Prostate gland (tissue), 2 donors: ENCODE measurements at regions of chr11 and their contacts with region 1.

Region 1: GRCh38 chr11:125923012-125923579 is 18.8 kb downstream of the DDX25 start:
- DNase-seq: peak; percentile 69
- H3K4me3 ChIP-seq: no peak overlapping the region
- H3K27ac ChIP-seq: no peak overlapping the region
- H3K4me1 ChIP-seq: no peaks in the 10 kb centered on the region
- H3K27me3 ChIP-seq: no peaks in the 10 kb centered on the region
- CTCF ChIP-seq: peak; percentile 58 to 84 (median 72)
- POLR2A ChIP-seq: no peak

Region 2: DNA sequence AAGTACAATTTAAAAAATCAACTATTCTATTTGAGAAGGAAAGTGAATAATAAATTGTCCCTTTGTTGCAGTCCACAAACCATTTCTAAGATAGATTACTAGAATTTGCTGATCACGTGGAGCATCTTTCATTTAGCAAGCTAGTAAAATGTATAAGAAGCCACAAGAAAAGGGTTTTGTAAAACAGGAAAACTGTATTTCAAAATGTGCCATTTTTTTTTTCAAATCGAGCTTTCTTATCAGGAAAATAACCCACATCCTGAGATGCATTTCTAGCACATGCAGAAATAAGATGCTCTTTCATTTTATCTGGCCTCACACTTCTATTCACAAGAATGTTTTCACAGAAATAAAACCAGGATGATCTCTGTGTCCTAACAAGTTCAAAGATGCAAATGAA is 138.4 kb before region 1 on chr11:
- intact Hi-C with region 1: no loop called
- DNase-seq: no peak
- H3K4me3 ChIP-seq: no peak overlapping the region
- H3K27ac ChIP-seq: no peak overlapping the region
- H3K4me1 ChIP-seq: no peaks in the 10 kb centered on the region
- H3K27me3 ChIP-seq: no peaks in the 10 kb centered on the region
- CTCF ChIP-seq: no peak
- POLR2A ChIP-seq: no peak

Region 3: DNA sequence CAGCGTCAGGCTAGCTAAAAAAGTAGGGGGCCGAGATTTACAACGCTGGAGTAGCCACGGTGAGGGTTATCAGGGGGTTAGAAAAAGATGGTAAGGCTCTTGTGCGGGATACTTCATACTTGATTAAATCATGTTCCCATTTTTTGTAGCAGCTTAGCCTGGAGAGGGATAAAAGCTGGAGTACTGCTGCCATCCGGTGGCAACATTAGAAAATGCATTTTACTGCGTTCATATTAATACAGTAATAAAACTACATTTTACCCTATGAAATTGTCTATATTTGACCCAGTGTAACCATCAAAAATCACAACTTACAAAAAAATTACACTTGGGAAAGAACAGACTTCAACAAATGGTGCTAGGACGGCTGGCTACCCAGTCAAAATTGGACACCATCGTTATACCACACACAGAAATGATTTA is 271.0 kb after region 1 on chr11:
- intact Hi-C with region 1: loop called (anchors 1 kb)
- DNase-seq: peak; percentile 28
- H3K4me3 ChIP-seq: no peak overlapping the region
- H3K27ac ChIP-seq: no peak overlapping the region
- H3K4me1 ChIP-seq: no peaks in the 10 kb centered on the region
- H3K27me3 ChIP-seq: no peaks in the 10 kb centered on the region
- CTCF ChIP-seq: peak; percentile 41 to 86 (median 81)
- POLR2A ChIP-seq: no peak